Activated T-helper 2 cell treated with anti-CD3 and anti-CD28 coated beads, Interferon-gamma antibody, Interleukin-2, Interleukin-4, amounts not matched to agents 10 μg/mL and 5 μg/mL and 100 μg/mL, durations not matched to agents 14 hours and 24 hours and 36 hours (primary cell): ENCODE measurements at regions of chr5 and their contacts with region 1.

Region 1: GRCh38 chr5:99060306-99061261 is 131.8 kb upstream of the CHD1 start:
- DNase-seq: peak; percentile 69
- H3K4me3 Mint-ChIP-seq: no peak overlapping the region
- H3K27ac Mint-ChIP-seq: no peak overlapping the region
- H3K4me1 Mint-ChIP-seq: peaks cover 9% of the 10 kb centered on the region
- H3K27me3 Mint-ChIP-seq: peaks cover 7% of the 10 kb centered on the region

Region 2: GRCh38 chr5:98768160-98769005 is 292.2 kb before region 1 on chr5:
- intact Hi-C with region 1: loop called (anchors 2 kb)
- DNase-seq: no peak
- H3K4me3 Mint-ChIP-seq: peak overlapping the region; percentile 69
- H3K27ac Mint-ChIP-seq: no peak overlapping the region
- H3K4me1 Mint-ChIP-seq: peaks cover 38% of the 10 kb centered on the region
- H3K27me3 Mint-ChIP-seq: peaks cover 70% of the 10 kb centered on the region

Region 3: DNA sequence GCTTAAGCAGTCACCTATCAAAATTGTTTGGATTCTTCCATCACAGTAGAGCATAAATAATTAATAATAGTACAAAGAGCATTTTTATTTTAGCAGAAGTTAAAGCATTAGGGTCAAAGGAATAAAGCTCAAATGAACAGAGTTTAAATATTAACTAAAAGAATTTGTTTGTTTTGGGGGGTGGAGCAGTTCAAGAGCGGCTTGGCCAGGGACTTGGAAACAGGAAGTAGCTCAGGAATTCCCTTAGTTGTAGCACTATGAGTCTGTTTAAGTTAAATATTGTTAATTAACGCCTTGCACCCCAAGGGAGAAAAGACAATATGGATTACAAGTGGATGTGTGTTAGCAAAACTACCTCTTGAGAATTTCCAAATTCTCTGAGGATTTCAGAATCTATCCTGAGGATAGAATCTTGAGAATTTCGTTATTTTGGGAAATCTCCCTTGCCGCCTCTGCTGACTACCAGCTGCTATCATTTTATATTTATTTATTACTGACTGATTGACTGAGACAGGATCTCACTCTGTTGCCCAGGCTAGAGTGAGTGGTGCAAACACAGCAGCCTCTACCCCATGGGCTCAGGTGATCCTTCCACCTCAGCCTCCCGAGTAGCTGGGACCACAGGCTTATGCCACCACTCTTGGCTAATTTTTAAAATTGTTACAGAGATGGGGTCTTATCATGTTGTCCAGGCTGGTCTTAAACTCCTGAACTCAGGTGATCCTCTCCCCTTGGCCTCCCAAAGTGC is 35.1 kb before region 1 on chr5:
- intact Hi-C with region 1: loop called (anchors 5 kb)
- DNase-seq: no peak
- H3K4me3 Mint-ChIP-seq: no peak overlapping the region
- H3K27ac Mint-ChIP-seq: no peak overlapping the region
- H3K4me1 Mint-ChIP-seq: peaks cover 34% of the 10 kb centered on the region
- H3K27me3 Mint-ChIP-seq: no peaks in the 10 kb centered on the region